Pancreas (tissue), 10 donors: ENCODE measurements at regions of chr19 and their contacts with region 1.

Region 1: GRCh38 chr19:2273356-2274184 is 8.4 kb downstream of the PEAK3 start:
- DNase-seq: peak; percentile 60 to 94 (median 83)
- ATAC-seq: peak; percentile 26 to 32 (median 29)
- H3K4me3 ChIP-seq: peak overlapping the region in 2 of 4 donors; percentile 11 to 28
- H3K27ac ChIP-seq: peak overlapping the region in 2 of 4 donors; percentile 54 to 70
- H3K4me1 ChIP-seq: peaks cover 8 to 21% (median 14%) of the 10 kb centered on the region in 3 donors
- H3K27me3 ChIP-seq: no peaks in the 10 kb centered on the region
- CTCF ChIP-seq: peak; percentile 91 to 98 (median 96)

Region 2: DNA sequence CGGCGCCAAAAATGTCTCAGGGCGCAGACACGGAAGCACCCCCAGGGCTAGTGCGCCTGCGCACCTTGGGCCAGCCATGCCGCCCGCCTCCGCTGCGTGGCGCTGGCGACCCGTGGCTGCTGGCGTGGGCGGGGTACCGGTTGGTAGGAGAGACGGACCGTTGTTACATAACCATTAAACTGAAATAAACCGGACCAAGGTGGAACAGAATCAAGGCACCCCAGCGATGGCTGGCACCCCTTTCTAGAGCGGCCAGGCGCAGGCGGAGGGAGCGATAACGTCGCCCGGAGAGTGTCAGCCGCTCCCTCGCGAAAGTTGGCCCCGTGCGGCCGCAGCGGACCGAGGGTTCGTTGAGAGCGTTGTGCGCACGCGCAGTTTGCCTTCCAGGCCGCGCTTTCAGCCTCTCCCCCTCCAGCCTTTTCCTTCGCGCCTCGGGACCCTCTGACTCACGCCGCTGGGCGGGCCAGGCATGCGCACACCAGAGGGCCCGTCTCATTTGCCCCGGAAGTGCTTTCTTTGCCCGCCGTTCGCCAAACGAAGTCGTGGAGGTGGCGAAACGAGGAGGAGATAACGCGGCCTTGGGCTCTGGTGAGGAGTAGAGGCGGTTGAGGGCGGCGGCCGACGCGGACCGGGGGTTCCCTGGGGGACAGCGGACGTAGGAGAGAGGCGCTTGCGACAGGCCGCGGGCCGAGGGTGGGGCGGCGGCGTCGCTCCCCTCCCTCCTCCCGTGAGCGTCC is 37.1 kb before region 1 on chr19 and contains the starts of genes PLEKHJ1 and SF3A2:
- intact Hi-C with region 1: loop called in 1 of 3 experiments (anchors 5 kb)
- DNase-seq: peak; percentile 95 to 100 (median 98)
- ATAC-seq: peak; percentile 86 to 94 (median 87)
- H3K4me3 ChIP-seq: peak within 1 kb of the TSS; percentile 82 to 96 (median 94)
- H3K27ac ChIP-seq: peak within 1 kb of the TSS; percentile 96 to 100 (median 98)
- H3K4me1 ChIP-seq: peaks cover 12 to 44% (median 36%) of the 10 kb centered on the region in 3 donors
- H3K27me3 ChIP-seq: no peaks in the 10 kb centered on the region
- CTCF ChIP-seq: peak; percentile 95 to 99 (median 98)
- total RNA-seq, gene PLEKHJ1: 34.3 to 50.8 (median 39.6) TPM
- total RNA-seq, gene SF3A2: 25.0 to 36.1 (median 29.6) TPM

Region 3: DNA sequence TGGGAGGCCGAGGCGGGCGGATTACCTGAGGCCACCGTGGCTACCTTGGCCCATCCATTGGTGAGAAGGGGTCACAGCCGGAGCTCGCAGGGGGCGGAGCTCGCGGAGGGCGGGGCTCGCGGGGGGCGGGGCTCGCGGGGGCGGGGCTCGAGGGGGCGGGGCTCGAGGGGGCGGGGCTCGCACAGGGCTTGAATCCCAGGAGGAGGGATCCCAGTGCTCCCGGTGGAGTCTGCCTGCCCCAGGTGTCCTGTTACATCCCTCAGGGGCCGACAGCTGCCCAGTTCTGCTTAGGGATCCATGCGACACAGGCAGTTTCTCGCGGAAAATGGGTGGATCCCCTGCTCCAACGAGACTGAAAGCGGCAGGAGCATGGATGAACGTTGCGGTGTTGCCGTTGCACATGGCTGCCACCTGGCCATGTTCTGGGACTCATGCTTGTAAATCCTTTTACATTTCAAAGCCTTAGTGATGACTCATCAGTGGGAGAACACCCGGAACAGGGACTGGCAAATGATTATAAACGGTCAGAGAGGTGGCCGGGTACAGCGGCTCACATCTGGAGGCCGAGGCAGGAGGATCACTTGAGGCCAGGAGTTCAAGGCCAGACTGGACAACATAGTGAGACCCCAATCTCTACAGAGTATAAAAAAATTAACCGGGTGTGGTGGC is 111.6 kb after region 1 on chr19:
- intact Hi-C with region 1: loop called in 2 of 3 experiments (anchors 5 kb)
- DNase-seq: peak in 5 of 6 donors; percentile 23 to 67 (median 52)
- ATAC-seq: peak; percentile 74 to 81 (median 78)
- H3K4me3 ChIP-seq: peak overlapping the region in 1 of 4 donors; percentile 17
- H3K27ac ChIP-seq: no peak overlapping the region
- H3K4me1 ChIP-seq: no peaks in the 10 kb centered on the region
- H3K27me3 ChIP-seq: no peaks in the 10 kb centered on the region
- CTCF ChIP-seq: no peak

Region 4: DNA sequence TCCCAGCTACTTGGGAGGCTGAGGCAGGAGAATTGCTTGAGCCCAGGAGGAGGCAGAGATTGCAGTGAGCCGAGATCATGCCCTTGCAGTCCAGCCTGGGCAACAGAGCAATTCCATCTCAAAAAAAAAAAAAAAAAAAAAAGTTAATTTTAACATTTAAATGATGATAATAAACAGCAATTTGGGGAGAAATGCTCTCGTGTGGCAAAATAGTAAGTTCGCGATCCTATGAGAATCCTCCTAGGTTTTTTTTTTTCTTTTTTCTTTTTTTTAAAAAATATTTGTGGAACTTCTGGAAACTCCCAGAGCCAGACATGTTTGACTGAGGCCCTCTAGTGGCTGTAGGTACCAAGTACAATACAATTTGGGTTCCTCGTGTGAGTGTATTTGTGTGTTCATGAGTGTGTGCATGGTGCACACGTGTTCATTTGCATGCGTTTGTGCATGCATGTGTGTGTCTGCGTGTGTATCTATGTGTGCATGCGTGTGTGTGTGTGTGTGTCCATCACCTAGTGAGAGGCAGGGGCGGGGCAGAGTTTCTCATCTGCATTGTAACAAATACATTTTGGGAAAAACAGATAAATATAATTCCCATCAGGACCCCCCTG is 117.7 kb after region 1 on chr19:
- intact Hi-C with region 1: loop called in 2 of 3 experiments (anchors 5 kb)
- DNase-seq: peak in 3 of 6 donors; percentile 24 to 52 (median 31)
- ATAC-seq: peak; percentile 68 to 92 (median 86)
- H3K4me3 ChIP-seq: no peak overlapping the region
- H3K27ac ChIP-seq: no peak overlapping the region
- H3K4me1 ChIP-seq: no peaks in the 10 kb centered on the region
- H3K27me3 ChIP-seq: no peaks in the 10 kb centered on the region
- CTCF ChIP-seq: peak; percentile 39 to 74 (median 56)

Region 5: DNA sequence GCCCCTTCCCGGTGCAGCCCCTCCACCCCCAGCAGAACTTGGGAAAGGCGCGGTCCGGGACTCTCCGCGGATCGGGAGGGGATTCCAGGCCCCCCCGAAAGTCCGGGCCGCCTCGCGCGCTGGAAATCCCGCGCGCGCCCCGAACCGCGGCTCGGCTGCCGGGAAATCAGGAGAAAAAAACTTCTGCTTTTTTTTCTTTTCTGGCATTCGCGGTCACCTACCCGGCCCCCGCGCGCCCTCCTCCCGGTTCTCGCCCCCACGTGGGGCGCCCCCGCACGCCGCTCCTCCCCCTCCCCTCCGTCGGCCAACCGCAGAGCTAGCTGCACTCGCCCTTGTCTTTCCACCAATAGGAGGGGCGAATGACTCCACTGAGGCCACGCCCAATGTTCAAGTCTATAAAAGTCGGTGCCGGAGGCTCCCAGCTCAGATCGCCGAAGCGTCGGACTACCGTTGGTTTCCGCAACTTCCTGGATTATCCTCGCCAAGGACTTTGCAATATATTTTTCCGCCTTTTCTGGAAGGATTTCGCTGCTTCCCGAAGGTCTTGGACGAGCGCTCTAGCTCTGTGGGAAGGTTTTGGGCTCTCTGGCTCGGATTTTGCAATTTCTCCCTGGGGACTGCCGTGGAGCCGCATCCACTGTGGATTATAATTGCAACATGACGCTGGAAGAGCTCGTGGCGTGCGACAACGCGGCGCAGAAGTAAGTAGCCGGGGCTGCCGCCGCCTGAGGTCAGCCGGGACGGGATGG is 202.3 kb after region 1 on chr19 and contains the start of gene GADD45B:
- intact Hi-C with region 1: no loop called
- DNase-seq: peak; percentile 97 to 99 (median 98)
- ATAC-seq: peak; percentile 76 to 82 (median 80)
- H3K4me3 ChIP-seq: peak within 1 kb of the TSS; percentile 89 to 96 (median 94)
- H3K27ac ChIP-seq: peak within 1 kb of the TSS; percentile 74 to 89 (median 82)
- H3K4me1 ChIP-seq: peaks cover 0 to 3% (median 0%) of the 10 kb centered on the region in 3 donors
- H3K27me3 ChIP-seq: no peaks in the 10 kb centered on the region
- CTCF ChIP-seq: no peak
- total RNA-seq, gene GADD45B: 20.4 to 58.8 (median 42.3) TPM